AG04449 (cell line): ENCODE measurements at regions of chr6 and their contacts with region 1.

Region 1: GRCh38 chr6:116287689-116288282 is 8.1 kb upstream of the TSPYL1 start:
- DNase-seq: no peak
- H3K4me3 ChIP-seq: no peak overlapping the region
- CTCF ChIP-seq: peak; percentile 69

Region 2: GRCh38 chr6:116190550-116190949 is 97.2 kb before region 1 on chr6:
- CTCF ChIA-PET with region 1: no interaction called
- POLR2A ChIA-PET with region 1: no interaction called
- DNase-seq: peak; percentile 75
- H3K4me3 ChIP-seq: no peak overlapping the region
- CTCF ChIP-seq: no peak

Region 3: GRCh38 chr6:116217069-116217468 is 70.7 kb before region 1 on chr6:
- CTCF ChIA-PET with region 1: interaction called, 20 read pairs
- POLR2A ChIA-PET with region 1: no interaction called
- DNase-seq: no peak
- H3K4me3 ChIP-seq: no peak overlapping the region
- CTCF ChIP-seq: peak; percentile 30

Region 4: DNA sequence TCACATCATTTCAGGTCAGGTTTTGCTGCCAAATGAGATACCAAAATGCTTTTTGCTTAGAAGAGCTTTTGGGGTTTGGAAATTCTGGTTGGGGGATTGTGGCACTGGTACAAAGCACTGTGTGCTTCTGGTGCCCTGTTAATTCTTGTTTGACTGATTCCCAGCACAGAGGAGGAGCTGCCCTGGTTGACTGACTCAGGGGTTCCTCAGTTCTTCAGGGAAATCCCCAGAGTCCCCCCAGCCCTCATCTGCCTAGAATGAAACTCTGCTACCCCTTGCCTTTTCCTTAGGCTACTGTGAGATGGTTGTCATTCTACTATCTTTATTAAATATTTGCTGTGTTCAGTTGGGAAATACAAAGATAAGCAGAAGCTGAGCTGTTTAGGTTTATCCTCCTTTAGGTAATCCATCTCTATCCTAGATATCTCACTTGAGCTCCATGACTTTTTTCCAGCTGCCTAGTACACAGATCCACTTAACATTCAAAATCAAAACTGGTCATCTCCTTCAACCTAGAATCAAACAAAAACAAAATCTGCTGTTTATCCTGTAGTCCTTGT is 16.8 kb after region 1 on chr6:
- CTCF ChIA-PET with region 1: interaction called, 23 read pairs
- POLR2A ChIA-PET with region 1: no interaction called
- DNase-seq: no peak
- H3K4me3 ChIP-seq: no peak overlapping the region
- CTCF ChIP-seq: no peak

Region 5: DNA sequence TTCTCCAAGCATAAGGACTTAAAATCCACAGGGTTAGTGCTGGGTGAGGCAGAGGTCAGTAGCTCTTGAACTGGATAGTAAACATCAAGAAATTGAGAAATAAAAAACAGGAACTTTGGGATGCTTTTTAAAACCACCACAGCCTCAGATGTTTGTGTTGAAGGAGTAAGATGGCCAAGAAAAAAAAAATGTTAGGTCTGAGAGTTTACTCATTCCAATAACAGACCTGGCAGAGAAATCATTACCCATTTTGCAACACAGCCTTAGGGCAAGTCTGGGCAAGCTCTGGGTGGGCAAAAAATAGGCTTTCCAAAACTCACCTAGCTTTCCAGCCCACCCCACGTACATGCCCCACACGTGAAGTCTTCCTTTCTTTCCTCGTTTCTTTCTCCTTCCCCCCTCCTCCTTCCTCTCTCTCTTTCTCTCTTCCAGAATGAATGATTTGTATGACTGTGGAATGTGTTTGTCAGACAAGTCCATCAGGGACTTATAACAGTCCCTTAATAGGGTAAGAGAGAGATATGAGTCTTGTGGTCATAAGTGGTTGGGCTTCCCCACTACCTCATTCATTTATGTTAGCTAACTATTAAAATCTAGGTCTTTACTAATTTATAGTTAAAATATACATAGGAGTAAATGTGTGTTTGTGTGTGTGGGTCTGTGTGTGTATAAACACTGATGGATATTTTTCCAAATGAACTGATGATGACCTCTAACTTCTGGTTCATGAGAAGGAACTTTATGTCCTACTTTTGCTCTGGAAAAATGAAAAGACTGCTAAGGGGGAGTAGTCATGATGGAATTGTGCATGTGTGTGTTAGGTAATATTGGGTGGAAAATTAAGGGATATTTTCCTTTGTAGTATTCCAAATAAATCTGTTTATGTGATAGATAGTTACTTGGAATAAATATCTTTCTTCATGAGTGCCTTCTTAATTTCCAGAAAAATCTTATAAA is 65.0 kb after region 1 on chr6:
- CTCF ChIA-PET with region 1: interaction called, 11 read pairs
- POLR2A ChIA-PET with region 1: no interaction called
- DNase-seq: no peak
- H3K4me3 ChIP-seq: no peak overlapping the region
- CTCF ChIP-seq: no peak

Region 6: DNA sequence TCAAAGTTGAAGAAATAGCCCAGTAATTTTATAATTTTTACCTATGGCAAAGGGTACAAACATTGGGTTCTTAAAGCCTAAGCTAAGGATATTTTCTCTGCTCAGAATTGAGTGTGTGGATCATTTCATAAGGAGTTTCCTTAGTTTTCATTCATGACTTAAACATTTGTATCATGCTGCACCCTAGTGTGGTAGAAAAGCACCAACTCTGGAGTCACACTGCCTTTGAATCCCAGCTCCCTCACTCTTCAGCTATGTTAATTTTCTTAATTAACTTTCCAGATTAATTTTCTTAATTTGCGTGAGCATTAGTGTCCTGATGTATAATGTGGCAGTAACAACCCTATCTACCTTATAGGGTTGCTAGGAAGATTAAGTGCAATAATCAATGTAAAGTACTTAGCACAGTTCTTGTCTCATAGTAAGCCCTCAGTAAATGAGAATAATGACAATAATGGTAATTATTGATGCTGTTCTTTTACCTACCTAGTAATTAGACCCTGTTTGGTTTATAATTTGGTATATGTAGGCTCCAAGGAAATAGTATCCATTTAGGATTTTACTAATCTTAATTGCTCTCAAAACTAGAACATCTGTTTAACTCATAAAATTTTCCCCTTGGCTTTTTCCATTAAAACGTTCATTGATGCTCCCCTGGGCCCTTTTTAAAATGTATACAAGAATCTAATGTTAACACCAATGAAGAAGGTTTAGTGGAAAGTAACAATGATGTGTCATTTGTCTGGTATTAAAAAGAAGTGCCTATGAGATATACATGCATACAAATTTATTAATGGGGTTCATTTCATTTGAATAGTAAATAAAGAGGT is 114.5 kb after region 1 on chr6:
- CTCF ChIA-PET with region 1: interaction called, 49 read pairs
- POLR2A ChIA-PET with region 1: no interaction called
- DNase-seq: no peak
- H3K4me3 ChIP-seq: no peak overlapping the region
- CTCF ChIP-seq: no peak

Region 7: DNA sequence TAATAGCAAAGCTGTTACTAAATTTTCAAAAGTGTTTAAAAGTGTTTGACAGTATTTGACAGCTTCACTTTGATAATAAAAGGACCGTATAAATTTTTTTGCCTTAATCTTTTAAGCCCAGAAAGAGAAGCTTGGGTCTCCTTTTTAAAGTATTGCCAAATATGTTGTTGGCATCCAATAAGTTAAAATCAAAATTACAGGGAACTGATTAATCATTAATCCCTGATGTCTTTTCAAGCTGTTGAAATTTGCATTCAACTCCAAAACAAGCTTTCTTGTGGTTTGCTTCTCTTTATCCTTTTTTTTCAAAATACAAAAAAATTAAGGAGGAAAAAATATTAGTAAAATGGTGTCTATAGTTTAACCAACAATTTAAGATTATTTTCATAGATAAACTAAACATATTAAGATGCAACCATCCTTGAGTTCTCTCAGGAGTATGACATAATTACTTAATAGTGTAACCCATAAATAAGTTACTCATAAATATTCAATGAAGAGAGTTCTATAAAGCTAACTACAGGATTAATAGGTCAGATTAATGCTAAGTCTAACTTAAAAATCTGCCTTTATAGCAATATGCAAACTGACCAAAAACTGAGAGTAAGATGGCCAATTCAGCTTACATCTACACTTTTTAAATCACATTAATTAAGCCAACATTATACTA is 146.4 kb after region 1 on chr6:
- CTCF ChIA-PET with region 1: interaction called, 15 read pairs
- POLR2A ChIA-PET with region 1: no interaction called
- DNase-seq: no peak
- H3K4me3 ChIP-seq: no peak overlapping the region
- CTCF ChIP-seq: no peak

Region 8: DNA sequence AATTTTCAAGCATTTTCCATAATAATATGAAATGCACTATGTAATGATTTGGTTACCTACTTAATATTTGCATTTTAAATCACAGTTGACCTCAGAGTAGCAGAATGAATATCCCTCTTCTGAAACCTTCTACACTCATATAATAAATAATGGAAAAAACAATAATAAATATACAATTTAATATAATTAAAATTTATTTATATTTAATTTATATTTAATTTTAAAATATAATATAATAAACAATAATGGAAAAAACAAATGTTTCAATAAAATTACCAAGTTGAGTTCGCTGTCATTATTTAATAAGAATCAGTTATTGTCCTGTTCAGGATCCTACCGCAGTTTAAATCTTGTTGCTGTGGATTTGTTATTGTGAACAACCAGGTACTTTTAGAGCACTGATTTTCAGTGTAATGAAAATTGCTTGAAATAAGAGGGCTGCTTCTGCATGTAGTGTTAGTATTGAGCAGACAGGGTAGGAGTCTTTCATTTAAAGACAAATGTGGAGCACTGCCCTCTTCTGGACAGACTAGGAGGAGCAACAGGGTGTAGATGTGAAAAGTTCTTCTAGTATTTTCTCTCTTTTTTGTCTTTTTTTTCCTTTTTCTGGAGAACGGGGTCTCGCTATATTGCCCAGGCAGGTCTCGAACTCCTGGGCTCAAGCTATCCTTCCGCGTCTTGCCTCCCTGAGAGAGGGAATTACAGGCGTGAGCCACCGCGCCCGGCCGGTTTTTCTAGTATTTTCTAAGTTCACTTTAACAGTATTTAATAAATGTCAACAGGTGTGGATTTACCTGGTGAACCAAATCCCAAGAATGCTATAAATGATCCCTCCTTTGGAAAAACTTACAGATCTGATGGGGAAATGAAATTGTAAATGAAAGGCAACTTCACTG is 244.1 kb after region 1 on chr6:
- CTCF ChIA-PET with region 1: interaction called, 78 read pairs
- POLR2A ChIA-PET with region 1: no interaction called
- DNase-seq: no peak
- H3K4me3 ChIP-seq: no peak overlapping the region
- CTCF ChIP-seq: peak; percentile 57